ENCODE measurements at regions of chr16 and their contacts with region 1.

Region 1: DNA sequence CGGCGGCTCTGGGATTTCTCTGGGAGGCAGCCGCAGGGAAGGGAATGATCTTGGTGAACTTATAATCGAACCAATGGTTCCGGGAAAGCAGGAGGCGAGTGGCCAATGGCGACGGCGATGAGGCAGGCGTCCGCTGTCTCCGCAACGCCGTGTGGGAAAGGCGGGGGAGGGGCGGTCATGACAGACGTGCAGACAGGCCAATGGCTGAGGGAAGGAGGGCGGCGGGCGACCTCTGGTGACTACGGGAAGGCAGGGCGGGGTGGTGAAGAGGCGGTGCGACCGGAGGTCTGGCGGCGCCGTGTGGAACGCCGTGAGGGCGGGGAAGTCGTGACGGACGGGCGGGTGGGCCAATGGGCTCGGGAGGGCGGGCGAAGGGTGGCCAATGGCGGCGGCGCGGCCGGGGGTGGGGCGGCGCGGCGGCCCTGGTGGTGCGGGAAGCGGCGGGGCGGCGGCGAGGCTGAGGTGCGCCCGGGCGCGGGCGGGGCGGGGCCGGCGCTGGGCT is at the start of gene RAB40C:
- DNase-seq: peak; percentile 96 to 99 (median 99)
- ATAC-seq: peak; percentile 91
- H3K4me3 ChIP-seq: peak within 1 kb of the TSS; percentile 93
- H3K4me3 Mint-ChIP-seq: peak within 1 kb of the TSS; percentile 86 to 100 (median 98)
- H3K27ac ChIP-seq: peak within 1 kb of the TSS; percentile 93
- H3K27ac Mint-ChIP-seq: peak within 1 kb of the TSS; percentile 95 to 100 (median 99)
- H3K4me1 ChIP-seq: peaks cover 15 to 17% of the 10 kb centered on the region in 2 donors
- H3K4me1 Mint-ChIP-seq: peaks cover 25 to 50% (median 45%) of the 10 kb centered on the region in 7 donors
- H3K27me3 ChIP-seq: no peaks in the 10 kb centered on the region
- H3K27me3 Mint-ChIP-seq: no peaks in the 10 kb centered on the region
- total RNA-seq, gene RAB40C: 15.8 to 23.2 (median 17.8) TPM

Region 2: DNA sequence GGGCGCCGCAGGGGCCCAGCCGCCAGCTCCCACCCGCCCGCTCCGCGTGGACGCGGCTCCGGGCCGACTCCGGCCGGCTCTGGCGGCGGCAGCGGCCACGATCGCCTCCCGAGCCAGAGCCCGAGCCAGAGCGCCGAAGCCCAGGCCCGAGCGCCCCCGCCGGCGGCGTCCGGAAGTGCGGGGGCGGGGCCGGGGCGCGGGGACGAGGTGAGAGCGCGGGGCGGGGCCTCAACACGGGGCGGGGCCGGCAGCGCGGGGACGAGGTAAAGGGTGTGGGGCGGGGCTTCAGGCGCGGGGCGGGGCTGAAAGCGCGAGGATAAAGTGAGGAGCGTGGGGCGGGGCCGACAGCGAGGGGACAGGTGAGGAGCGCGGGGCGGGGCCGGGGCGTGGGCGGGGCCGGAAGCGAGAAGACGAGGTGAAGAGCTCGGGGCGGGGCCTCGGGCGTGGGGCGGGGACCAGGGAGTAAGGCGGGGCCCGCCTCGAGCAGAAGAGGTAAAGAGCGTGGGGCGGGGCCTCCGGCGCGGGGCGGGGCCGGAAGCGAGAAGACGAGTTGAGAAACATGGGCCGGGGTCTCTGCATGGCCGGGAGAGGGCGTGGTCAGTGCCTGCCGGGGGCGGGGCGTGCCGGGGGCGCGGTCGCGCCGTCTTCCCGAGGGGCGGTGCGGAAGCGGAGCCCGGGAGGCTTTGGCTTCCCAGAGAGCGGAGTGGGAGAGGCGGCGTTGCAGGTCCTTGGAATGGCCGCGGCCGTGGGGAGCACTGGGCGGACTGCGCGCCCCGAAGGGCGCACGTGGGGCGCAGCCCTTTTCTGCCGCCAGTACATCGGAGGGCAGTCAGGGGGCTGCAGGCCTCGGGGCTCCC is 236.9 kb before region 1 on chr16 and contains the start of gene AXIN1:
- CTCF ChIA-PET with region 1: no interaction called
- POLR2A ChIA-PET with region 1: no interaction called
- intact Hi-C with region 1: no loop called
- DNase-seq: peak; percentile 98 to 100 (median 99)
- ATAC-seq: peak; percentile 94
- H3K4me3 ChIP-seq: peak within 1 kb of the TSS; percentile 57
- H3K4me3 Mint-ChIP-seq: peak within 1 kb of the TSS; percentile 80 to 97 (median 93)
- H3K27ac ChIP-seq: peak within 1 kb of the TSS; percentile 75
- H3K27ac Mint-ChIP-seq: peak within 1 kb of the TSS; percentile 68 to 97 (median 94)
- H3K4me1 ChIP-seq: peaks cover 43 to 59% of the 10 kb centered on the region in 2 donors
- H3K4me1 Mint-ChIP-seq: peaks cover 25 to 61% (median 44%) of the 10 kb centered on the region in 7 donors
- H3K27me3 ChIP-seq: no peaks in the 10 kb centered on the region
- H3K27me3 Mint-ChIP-seq: no peaks in the 10 kb centered on the region
- total RNA-seq, gene AXIN1: 25.6 to 45.9 (median 37.5) TPM

Region 3: GRCh38 chr16:425082-425718 is 164.5 kb before region 1 on chr16 and contains the start of gene RAB11FIP3:
- CTCF ChIA-PET with region 1: no interaction called
- POLR2A ChIA-PET with region 1: no interaction called
- intact Hi-C with region 1: loop called in 1 of 2 experiments (anchors 1 kb)
- DNase-seq: peak; percentile 80 to 91 (median 87)
- ATAC-seq: peak; percentile 94
- H3K4me3 ChIP-seq: peak within 1 kb of the TSS; percentile 83
- H3K4me3 Mint-ChIP-seq: peak within 1 kb of the TSS; percentile 78 to 92 (median 88)
- H3K27ac ChIP-seq: peak within 1 kb of the TSS; percentile 92
- H3K27ac Mint-ChIP-seq: peak within 1 kb of the TSS in 8 of 9 donors; percentile 78 to 95 (median 90)
- H3K4me1 ChIP-seq: peaks cover 10 to 17% of the 10 kb centered on the region in 2 donors
- H3K4me1 Mint-ChIP-seq: peaks cover 22 to 39% (median 32%) of the 10 kb centered on the region in 7 donors
- H3K27me3 ChIP-seq: no peaks in the 10 kb centered on the region
- H3K27me3 Mint-ChIP-seq: peaks cover 0 to 18% (median 0%) of the 10 kb centered on the region in 5 donors
- total RNA-seq, gene RAB11FIP3: 37.9 to 53.0 (median 45.5) TPM

Region 4: DNA sequence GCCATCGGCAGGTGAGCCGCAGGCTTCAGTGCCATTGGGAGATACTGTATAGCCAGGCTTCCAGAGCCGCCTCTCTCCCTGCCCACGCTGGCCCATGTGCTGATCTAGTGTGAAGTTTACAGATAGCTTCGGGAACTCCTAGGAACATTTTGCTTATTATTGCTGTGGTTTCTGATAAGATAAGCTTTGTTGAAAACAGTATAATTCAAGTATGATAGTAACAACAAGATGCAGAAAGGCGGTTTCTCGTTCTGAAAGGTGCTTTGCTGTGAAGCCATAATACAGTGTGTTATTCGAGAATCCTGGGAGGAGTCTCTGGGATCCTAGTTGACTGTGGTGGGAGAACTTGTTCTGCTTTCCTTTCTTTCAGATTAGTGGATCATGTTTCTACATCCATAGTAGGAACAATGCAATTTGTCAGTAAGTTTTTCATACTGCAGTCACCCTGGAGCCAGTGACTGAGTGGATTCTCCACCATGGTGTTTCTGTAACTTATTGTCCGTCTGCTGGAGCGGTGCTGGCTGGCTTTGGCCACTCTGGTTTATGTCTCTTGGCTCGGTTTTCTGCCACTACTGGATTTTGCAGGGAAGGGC is 132.7 kb before region 1 on chr16:
- CTCF ChIA-PET with region 1: no interaction called
- POLR2A ChIA-PET with region 1: no interaction called
- intact Hi-C with region 1: no loop called
- DNase-seq: no peak
- ATAC-seq: no peak
- H3K4me3 ChIP-seq: no peak overlapping the region
- H3K4me3 Mint-ChIP-seq: no peak overlapping the region
- H3K27ac ChIP-seq: no peak overlapping the region
- H3K27ac Mint-ChIP-seq: peak overlapping the region in 5 of 9 donors; percentile 10 to 81 (median 50)
- H3K4me1 ChIP-seq: no peaks in the 10 kb centered on the region
- H3K4me1 Mint-ChIP-seq: peaks cover 0 to 16% (median 7%) of the 10 kb centered on the region in 7 donors
- H3K27me3 ChIP-seq: no peaks in the 10 kb centered on the region
- H3K27me3 Mint-ChIP-seq: no peaks in the 10 kb centered on the region

Region 5: GRCh38 chr16:569445-570254 is 20.1 kb before region 1 on chr16 and contains the start of gene PIGQ:
- CTCF ChIA-PET with region 1: no interaction called
- POLR2A ChIA-PET with region 1: interaction called, 19 read pairs
- intact Hi-C with region 1: loop called (anchors 1 kb)
- DNase-seq: peak; percentile 47 to 80 (median 62)
- ATAC-seq: peak; percentile 79
- H3K4me3 ChIP-seq: peak within 1 kb of the TSS; percentile 58
- H3K4me3 Mint-ChIP-seq: peak within 1 kb of the TSS; percentile 76 to 90 (median 85)
- H3K27ac ChIP-seq: peak within 1 kb of the TSS; percentile 89
- H3K27ac Mint-ChIP-seq: peak within 1 kb of the TSS; percentile 81 to 96 (median 89)
- H3K4me1 ChIP-seq: peaks cover 13 to 32% of the 10 kb centered on the region in 2 donors
- H3K4me1 Mint-ChIP-seq: peaks cover 15 to 39% (median 28%) of the 10 kb centered on the region in 7 donors
- H3K27me3 ChIP-seq: no peaks in the 10 kb centered on the region
- H3K27me3 Mint-ChIP-seq: no peaks in the 10 kb centered on the region
- total RNA-seq, gene PIGQ: 27.1 to 63.0 (median 45.1) TPM

Region 6: GRCh38 chr16:610513-611334 is 21.0 kb after region 1 on chr16:
- CTCF ChIA-PET with region 1: no interaction called
- POLR2A ChIA-PET with region 1: no interaction called
- intact Hi-C with region 1: loop called in 1 of 2 experiments (anchors 1 kb)
- DNase-seq: peak; percentile 35 to 58 (median 49)
- ATAC-seq: peak; percentile 87
- H3K4me3 ChIP-seq: no peak overlapping the region
- H3K4me3 Mint-ChIP-seq: no peak overlapping the region
- H3K27ac ChIP-seq: no peak overlapping the region
- H3K27ac Mint-ChIP-seq: peak overlapping the region in 2 of 9 donors; percentile 8 to 79
- H3K4me1 ChIP-seq: no peaks in the 10 kb centered on the region
- H3K4me1 Mint-ChIP-seq: peaks cover 3 to 21% (median 4%) of the 10 kb centered on the region in 7 donors
- H3K27me3 ChIP-seq: no peaks in the 10 kb centered on the region
- H3K27me3 Mint-ChIP-seq: no peaks in the 10 kb centered on the region

Region 7: GRCh38 chr16:714558-715476 is 125.1 kb after region 1 on chr16 and contains the start of gene METRN:
- CTCF ChIA-PET with region 1: no interaction called
- POLR2A ChIA-PET with region 1: no interaction called
- intact Hi-C with region 1: loop called in 1 of 2 experiments (anchors 1 kb)
- DNase-seq: peak; percentile 67 to 97 (median 82)
- ATAC-seq: peak; percentile 95
- H3K4me3 ChIP-seq: peak within 1 kb of the TSS; percentile 30
- H3K4me3 Mint-ChIP-seq: peak within 1 kb of the TSS in 9 of 10 donors; percentile 27 to 81 (median 61)
- H3K27ac ChIP-seq: no peak within 1 kb of the TSS
- H3K27ac Mint-ChIP-seq: peak within 1 kb of the TSS in 1 of 9 donors; percentile 11
- H3K4me1 ChIP-seq: peaks cover 5 to 7% of the 10 kb centered on the region in 2 donors
- H3K4me1 Mint-ChIP-seq: peaks cover 0 to 17% (median 12%) of the 10 kb centered on the region in 7 donors
- H3K27me3 ChIP-seq: peaks cover 0 to 4% of the 10 kb centered on the region in 2 donors
- H3K27me3 Mint-ChIP-seq: peaks cover 0 to 28% (median 5%) of the 10 kb centered on the region in 5 donors
- total RNA-seq, gene METRN: 4.8 to 5.1 (median 5.0) TPM

Region 8: DNA sequence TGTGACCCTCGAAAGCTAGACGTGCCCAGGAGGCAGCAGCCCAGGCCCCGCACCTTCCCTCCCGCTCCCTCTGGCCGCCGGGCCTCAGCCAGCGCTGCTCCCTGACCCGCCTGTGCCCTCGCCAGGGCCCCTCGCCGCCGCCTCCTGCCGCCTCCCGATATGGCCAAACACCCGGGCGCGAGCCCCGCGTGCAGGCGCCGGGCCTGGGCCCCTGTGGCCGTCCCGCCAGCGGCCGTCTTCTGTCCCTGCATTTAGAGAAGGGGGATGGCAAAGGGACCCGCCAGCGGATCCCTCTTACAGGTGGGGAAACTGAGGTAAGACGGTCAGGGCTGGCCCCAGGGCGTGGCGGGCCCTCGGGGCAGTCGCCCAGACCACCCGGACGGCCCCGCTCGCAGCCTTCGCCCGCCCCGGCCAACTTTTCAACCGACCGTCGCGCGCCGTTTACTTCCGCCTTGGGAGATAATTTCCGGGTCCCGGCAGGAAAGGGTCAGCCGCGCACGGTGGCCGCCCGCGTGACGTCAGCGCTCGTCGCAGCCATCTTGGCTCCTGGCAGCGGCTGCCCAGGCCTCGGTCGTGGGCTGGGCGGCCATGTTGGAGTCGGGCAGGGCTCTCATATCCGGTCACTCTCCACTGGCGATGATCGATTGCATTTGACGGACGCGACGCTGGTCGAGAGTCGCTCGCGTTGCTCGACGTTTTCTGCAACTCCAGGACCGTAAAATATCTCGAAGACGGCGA is 217.8 kb after region 1 on chr16:
- CTCF ChIA-PET with region 1: no interaction called
- POLR2A ChIA-PET with region 1: no interaction called
- intact Hi-C with region 1: no loop called
- DNase-seq: peak; percentile 53 to 89 (median 68)
- ATAC-seq: peak; percentile 95
- H3K4me3 ChIP-seq: peak overlapping the region; percentile 92
- H3K4me3 Mint-ChIP-seq: peak overlapping the region; percentile 92 to 100 (median 95)
- H3K27ac ChIP-seq: peak overlapping the region; percentile 88
- H3K27ac Mint-ChIP-seq: peak overlapping the region; percentile 92 to 98 (median 97)
- H3K4me1 ChIP-seq: peaks cover 0 to 9% of the 10 kb centered on the region in 2 donors
- H3K4me1 Mint-ChIP-seq: peaks cover 0 to 16% (median 12%) of the 10 kb centered on the region in 7 donors
- H3K27me3 ChIP-seq: no peaks in the 10 kb centered on the region
- H3K27me3 Mint-ChIP-seq: peaks cover 0 to 15% (median 5%) of the 10 kb centered on the region in 5 donors

Region 9: DNA sequence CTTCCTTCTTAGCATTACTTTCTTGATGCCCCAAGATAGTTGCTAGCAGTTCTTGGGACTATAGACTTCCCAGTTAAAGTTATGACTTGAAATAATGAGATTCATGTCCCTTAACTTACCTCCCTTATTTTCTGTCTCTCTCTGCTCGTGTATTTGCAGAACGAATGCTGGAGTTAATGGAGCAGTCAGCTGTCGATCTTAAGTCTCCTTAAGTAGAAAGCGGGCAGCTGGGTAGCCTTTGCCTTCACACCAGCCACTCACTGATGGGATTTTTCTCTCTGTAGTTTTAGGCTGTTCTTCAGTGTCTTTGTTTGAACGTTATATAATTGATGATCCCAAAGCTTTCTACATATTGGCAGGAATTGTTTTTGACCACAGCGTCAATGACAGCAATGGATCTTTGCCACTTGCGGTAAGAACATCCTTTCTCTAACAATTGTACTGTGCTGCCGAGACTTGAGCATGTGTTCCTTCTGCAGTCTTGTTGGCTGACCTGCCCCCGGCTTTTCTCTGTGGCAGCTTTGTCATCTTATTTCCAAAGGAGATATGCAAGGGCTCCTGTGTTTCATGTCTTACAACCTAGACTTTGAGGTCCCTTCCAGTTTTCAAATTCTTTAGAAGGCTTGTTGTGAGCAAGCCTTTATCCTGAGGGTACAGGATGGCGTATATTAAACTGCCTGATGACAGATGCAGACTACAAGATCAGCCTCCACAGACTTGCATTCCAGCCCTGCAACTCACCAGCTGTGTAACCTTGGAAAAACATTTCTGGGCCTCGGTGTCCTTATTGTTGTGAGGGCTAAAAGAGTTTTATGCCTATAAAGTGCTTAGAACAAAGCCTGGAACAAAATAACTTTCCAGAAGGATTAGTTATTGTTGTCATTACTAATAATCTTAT is 1775.9 kb after region 1 on chr16:
- CTCF ChIA-PET with region 1: no interaction called
- POLR2A ChIA-PET with region 1: no interaction called
- intact Hi-C with region 1: no loop called
- DNase-seq: no peak
- ATAC-seq: no peak
- H3K4me3 ChIP-seq: no peak overlapping the region
- H3K4me3 Mint-ChIP-seq: no peak overlapping the region
- H3K27ac ChIP-seq: no peak overlapping the region
- H3K27ac Mint-ChIP-seq: no peak overlapping the region
- H3K4me1 ChIP-seq: no peaks in the 10 kb centered on the region
- H3K4me1 Mint-ChIP-seq: peaks cover 0 to 10% (median 0%) of the 10 kb centered on the region in 7 donors
- H3K27me3 ChIP-seq: peaks cover 0 to 4% of the 10 kb centered on the region in 2 donors
- H3K27me3 Mint-ChIP-seq: peaks cover 27 to 46% (median 40%) of the 10 kb centered on the region in 5 donors